HepG2 (cell line): ENCODE measurements at regions of chr4 and their contacts with region 1.

Region 1: GRCh38 chr4:15139599-15139998 is 137.3 kb downstream of the CPEB2 start:
- DNase-seq: no peak
- ATAC-seq: no peak
- H3K4me3 ChIP-seq: no peak overlapping the region
- H3K27ac ChIP-seq: no peak overlapping the region
- H3K4me1 ChIP-seq: peaks cover 23% of the 10 kb centered on the region
- H3K27me3 ChIP-seq: no peaks in the 10 kb centered on the region
- CTCF ChIP-seq: no peak
- EP300 ChIP-seq: no peak
- POLR2A ChIP-seq: no peak
- RAD21 ChIP-seq: no peak

Region 2: DNA sequence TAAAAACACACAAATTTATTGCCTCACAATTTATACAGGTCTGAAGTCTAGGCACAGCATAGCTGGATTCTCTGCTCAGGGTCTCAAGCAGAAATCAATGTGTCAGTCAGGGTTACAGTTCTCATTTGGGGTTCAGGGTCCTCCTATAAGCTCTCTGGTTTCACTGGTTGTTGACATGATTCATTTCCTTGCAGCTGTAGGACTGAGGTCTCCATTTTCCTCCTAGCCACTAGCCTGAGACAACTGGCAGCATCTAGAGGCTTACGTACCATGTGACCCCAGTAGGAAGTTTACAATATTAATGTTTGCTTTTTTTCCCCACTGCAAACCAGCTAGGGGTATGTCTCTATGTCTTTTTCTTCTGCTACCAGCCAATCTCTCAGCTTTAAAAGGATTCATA is 34.8 kb before region 1 on chr4:
- CTCF ChIA-PET with region 1: no interaction called
- POLR2A ChIA-PET with region 1: no interaction called
- in situ Hi-C with region 1: no loop called
- intact Hi-C with region 1: loop called (anchors 1 kb)
- DNase-seq: no peak
- ATAC-seq: no peak
- H3K4me3 ChIP-seq: no peak overlapping the region
- H3K27ac ChIP-seq: no peak overlapping the region
- H3K4me1 ChIP-seq: peaks cover 5% of the 10 kb centered on the region
- H3K27me3 ChIP-seq: no peaks in the 10 kb centered on the region
- CTCF ChIP-seq: no peak
- EP300 ChIP-seq: no peak
- POLR2A ChIP-seq: no peak
- RAD21 ChIP-seq: no peak

Region 3: DNA sequence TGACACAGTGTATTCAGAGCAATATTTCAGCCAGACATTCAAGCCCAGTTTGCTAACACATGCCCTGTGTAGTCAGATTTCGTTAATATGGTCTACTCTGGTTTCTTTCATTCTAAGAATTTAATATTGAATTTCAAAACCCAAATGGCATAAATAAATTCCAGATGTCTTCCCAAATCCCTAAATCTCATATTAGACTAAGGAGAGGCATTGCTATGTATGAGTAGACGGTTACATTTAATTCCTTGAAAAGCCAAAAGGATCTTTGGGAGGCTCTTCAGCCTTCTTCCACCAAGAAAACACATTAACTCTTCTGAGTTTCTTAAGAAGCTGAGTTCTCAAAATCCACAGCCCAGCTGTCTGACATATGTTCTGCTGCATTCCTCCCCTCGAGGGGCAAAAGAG is 222.0 kb after region 1 on chr4:
- CTCF ChIA-PET with region 1: no interaction called
- POLR2A ChIA-PET with region 1: no interaction called
- in situ Hi-C with region 1: no loop called
- intact Hi-C with region 1: no loop called
- DNase-seq: no peak
- ATAC-seq: no peak
- H3K4me3 ChIP-seq: no peak overlapping the region
- H3K27ac ChIP-seq: no peak overlapping the region
- H3K4me1 ChIP-seq: no peaks in the 10 kb centered on the region
- H3K27me3 ChIP-seq: no peaks in the 10 kb centered on the region
- CTCF ChIP-seq: no peak
- EP300 ChIP-seq: no peak
- POLR2A ChIP-seq: no peak
- RAD21 ChIP-seq: no peak